ENCODE measurements at regions of chrX and their contacts with region 1.

Region 1: DNA sequence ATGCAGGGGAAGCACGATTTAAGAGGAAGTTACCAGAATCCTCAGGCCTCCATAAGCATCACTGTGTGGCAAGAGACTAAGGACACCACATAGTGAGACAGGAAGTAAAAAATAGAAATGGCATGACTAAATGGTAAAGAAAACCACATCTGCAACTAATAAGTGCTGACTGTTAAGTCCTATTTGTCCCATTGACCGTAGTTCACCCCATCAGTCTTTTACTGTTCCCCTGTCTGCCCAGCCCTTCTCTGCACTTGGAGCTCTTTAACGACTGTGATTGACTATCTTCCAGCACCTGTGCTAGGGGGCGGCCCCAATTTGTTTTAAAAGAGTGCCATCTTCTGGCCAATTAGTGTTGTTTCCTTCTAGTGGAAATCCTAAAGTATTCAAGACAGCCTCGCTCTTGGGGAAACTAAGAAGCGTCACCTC is 94.2 kb downstream of the MAOA start:
- DNase-seq: peak; percentile 51
- ATAC-seq: peak; percentile 60
- H3K4me3 Mint-ChIP-seq: no peak overlapping the region
- H3K27ac Mint-ChIP-seq: no peak overlapping the region
- H3K4me1 Mint-ChIP-seq: peaks cover 8% of the 10 kb centered on the region
- H3K27me3 Mint-ChIP-seq: no peaks in the 10 kb centered on the region

Region 2: GRCh38 chrX:43557792-43558191 is 192.5 kb before region 1 on chrX:
- CTCF ChIA-PET with region 1: interaction called, 23 read pairs
- POLR2A ChIA-PET with region 1: no interaction called
- DNase-seq: peak; percentile 65
- ATAC-seq: no peak
- H3K4me3 Mint-ChIP-seq: no peak overlapping the region
- H3K27ac Mint-ChIP-seq: no peak overlapping the region
- H3K4me1 Mint-ChIP-seq: peaks cover 5% of the 10 kb centered on the region
- H3K27me3 Mint-ChIP-seq: no peaks in the 10 kb centered on the region

Region 3: GRCh38 chrX:43564953-43565352 is 185.3 kb before region 1 on chrX:
- CTCF ChIA-PET with region 1: interaction called, 23 read pairs
- POLR2A ChIA-PET with region 1: no interaction called
- DNase-seq: no peak
- ATAC-seq: no peak
- H3K4me3 Mint-ChIP-seq: no peak overlapping the region
- H3K27ac Mint-ChIP-seq: no peak overlapping the region
- H3K4me1 Mint-ChIP-seq: no peaks in the 10 kb centered on the region
- H3K27me3 Mint-ChIP-seq: peaks cover 4% of the 10 kb centered on the region

Measured in activated CD8-positive, alpha-beta T cell treated with anti-CD3 and anti-CD28 coated beads, Interleukin-2, amount 10 ng/mL, durations not matched to agents 7 days and 5 days (primary cell).